ENCODE measurements at regions of chr1 and their contacts with region 1.

Region 1: DNA sequence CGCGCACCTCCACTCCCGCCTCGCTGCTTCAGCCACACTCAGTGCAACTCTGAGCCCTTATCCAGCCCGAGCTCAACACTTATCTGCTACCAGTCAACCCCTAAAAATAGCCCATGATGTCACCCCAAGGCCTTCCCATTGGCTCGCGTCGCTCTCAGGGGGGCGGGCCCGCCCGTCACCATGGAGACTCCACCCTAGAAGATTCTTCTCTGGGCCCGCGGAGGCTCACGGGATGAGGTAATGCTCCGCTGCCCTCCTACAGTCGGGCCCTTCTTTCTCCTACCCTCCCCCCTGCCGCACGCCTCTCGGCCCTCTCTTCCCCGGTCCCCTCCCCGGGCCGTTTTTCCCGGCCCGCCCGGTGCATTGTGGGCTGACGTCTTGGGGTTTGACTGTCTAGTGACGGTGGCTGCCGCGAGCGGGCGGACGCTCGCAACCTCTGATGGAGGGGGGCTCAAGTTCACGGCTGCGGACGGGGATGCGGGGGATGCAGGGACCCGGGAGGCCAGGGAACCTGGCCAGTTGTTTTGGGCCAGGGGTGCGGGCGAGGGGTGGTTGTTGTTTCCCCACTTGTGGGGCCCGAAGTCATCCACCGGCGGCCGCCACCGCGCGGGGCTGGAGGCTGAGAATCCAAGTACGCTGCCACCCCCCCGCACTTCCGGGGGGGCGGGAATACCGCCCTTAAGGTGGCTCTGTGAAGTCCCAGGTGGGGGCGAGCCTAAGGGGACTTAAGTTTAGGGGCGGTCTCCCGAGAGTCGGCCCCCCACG is at the start of gene JUN:
- DNase-seq: peak; percentile 99
- H3K4me3 ChIP-seq: peak within 1 kb of the TSS; percentile 91 to 96 (median 93)
- H3K27ac ChIP-seq: peak within 1 kb of the TSS; percentile 98
- H3K4me1 ChIP-seq: peaks cover 13% of the 10 kb centered on the region
- H3K27me3 ChIP-seq: no peaks in the 10 kb centered on the region
- CTCF ChIP-seq: peak in 1 of 2 donors; percentile 19
- total RNA-seq, gene JUN: 61.1 to 78.7 TPM

Region 2: GRCh38 chr1:58816072-58816746 is 32.0 kb after region 1 on chr1:
- CTCF ChIA-PET with region 1: no interaction called
- dilution Hi-C with region 1: loop called (anchors 5 kb)
- in situ Hi-C with region 1: no loop called
- intact Hi-C with region 1: loop called (anchors 1 kb)
- DNase-seq: peak; percentile 84
- H3K4me3 ChIP-seq: peak overlapping the region; percentile 51 to 70 (median 56)
- H3K27ac ChIP-seq: peak overlapping the region; percentile 77
- H3K4me1 ChIP-seq: peaks cover 71% of the 10 kb centered on the region
- H3K27me3 ChIP-seq: no peaks in the 10 kb centered on the region
- CTCF ChIP-seq: peak in 1 of 2 donors; percentile 25

Region 3: DNA sequence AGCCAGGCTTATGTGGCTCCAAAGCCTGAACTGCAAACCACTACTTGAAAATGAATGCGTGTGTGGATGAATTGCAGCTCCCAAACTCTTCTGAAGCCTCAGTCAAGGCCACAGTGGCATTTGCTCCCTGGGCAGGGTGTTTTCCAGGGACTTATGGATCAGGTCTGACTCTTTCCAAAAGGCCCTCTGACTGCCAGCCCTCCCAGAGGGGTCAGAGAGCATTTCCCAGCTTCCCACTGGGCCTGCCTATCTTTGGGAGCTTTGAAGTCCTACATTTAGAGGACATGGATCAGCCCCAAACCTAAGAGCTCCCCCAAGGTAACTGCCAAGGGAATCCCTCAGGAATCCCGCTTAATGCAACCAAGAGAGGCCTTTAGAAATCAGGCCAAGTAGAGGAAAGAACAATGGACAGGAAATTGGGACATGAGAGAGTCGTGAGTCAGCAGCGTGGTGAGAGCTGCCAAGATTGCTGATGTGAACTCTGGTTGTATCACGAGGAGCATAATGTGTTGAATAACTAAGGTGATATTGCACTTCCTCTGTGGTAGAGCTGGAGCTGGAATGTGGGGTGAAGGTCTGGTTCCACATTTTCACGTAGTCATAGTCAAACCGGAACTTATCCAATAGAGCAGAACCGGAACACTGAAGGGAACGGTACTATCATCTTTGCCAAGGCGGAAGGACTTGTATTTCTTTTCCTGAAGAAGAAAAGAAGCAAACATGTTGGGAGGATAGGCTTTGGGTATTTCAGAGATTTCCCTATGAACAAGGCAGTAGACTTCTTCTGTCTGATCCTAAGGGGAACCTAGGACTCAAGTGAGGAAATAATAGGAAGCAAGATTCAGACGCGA is 99.1 kb after region 1 on chr1:
- CTCF ChIA-PET with region 1: no interaction called
- dilution Hi-C with region 1: no loop called
- in situ Hi-C with region 1: no loop called
- intact Hi-C with region 1: loop called (anchors 1 kb)
- DNase-seq: peak; percentile 96
- H3K4me3 ChIP-seq: no peak overlapping the region
- H3K27ac ChIP-seq: peak overlapping the region; percentile 78
- H3K4me1 ChIP-seq: peaks cover 38% of the 10 kb centered on the region
- H3K27me3 ChIP-seq: no peaks in the 10 kb centered on the region
- CTCF ChIP-seq: no peak

Region 4: DNA sequence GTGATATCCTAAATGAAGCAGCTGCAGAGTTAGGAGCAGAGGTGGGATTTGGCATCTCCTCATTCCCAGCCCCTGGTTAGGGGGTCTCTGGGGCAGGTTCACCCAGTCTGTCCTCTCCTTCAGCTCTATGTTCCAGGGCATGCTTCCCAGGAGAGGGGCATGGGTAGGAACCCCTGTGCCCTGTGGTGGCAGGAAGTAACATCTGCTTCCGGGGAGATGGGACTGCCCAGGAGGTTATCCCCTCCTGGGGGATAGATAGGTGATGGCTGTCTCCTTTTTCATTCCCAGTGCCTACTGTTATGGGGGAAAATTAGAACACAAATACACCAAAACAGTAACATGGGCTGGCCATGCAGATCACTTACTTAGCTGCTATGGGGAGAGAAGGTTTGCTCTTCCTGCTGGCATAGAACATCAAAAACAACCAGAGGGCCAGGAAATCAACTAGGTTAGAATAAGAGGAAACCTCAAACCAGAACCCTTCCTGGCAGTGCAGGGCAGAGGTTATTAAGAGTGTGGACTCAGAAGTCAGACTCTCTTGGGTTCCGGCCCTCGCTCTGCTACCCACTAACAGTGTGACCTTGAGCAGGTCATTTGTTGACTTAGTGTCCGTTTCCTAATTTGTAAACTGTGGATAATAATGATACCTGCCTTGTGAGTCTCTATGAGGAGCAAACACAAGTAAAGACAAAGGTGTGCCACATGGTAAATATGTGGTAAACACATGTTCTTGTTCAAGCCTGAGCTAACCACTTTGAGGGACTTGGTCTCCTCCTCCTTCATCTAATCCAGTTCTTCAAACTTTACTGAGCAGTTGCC is 157.5 kb after region 1 on chr1:
- CTCF ChIA-PET with region 1: no interaction called
- dilution Hi-C with region 1: loop called (anchors 5 kb)
- in situ Hi-C with region 1: no loop called
- intact Hi-C with region 1: no loop called
- DNase-seq: no peak
- H3K4me3 ChIP-seq: no peak overlapping the region
- H3K27ac ChIP-seq: no peak overlapping the region
- H3K4me1 ChIP-seq: peaks cover 28% of the 10 kb centered on the region
- H3K27me3 ChIP-seq: no peaks in the 10 kb centered on the region
- CTCF ChIP-seq: no peak

Region 5: DNA sequence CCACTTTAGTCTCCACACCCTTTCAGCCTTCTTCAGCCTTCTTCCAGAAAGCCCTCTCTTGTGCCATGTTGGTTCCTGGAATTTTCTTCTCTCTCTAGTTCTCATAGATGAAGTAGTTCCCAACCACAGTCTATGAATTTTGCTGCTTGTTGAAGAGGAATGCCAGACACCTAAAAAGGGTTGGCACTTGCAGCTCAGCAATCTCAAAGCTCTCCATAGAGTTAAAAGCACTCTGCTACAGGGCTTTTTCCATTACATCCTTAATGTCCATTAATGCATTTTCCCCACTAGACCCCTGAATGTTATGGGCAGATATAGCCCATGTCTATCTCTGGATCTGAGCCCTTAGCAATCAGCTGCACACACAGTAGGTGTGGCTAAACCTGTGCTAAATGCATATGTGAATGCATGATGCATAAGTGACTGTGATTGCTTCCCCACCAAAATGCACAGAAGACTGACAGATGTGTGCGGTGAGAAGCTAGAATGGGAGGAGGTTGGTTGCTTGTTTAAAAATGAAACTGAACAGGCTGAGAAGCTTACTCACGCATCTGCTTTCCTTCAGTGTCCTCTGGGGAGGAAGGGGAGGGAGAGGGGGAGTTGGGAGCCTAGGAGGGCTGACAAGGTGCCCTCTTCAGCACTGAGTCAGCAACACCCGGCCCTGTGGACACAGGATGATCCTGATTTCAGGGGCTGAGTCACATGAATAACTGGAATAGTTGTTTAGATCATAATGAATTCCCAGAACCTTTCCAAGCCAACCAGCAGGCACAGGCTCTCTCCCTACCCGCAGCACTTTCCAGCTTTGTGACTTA is 366.6 kb after region 1 on chr1:
- CTCF ChIA-PET with region 1: no interaction called
- dilution Hi-C with region 1: loop called (anchors 5 kb)
- in situ Hi-C with region 1: loop called in 1 of 2 experiments (anchors 10 kb)
- intact Hi-C with region 1: loop called (anchors 1 kb)
- DNase-seq: peak; percentile 92
- H3K4me3 ChIP-seq: peak overlapping the region in 1 of 3 experiments; percentile 21
- H3K27ac ChIP-seq: peak overlapping the region; percentile 38
- H3K4me1 ChIP-seq: peaks cover 34% of the 10 kb centered on the region
- H3K27me3 ChIP-seq: no peaks in the 10 kb centered on the region
- CTCF ChIP-seq: no peak

Region 6: GRCh38 chr1:59446257-59446901 is 662.2 kb after region 1 on chr1:
- CTCF ChIA-PET with region 1: no interaction called
- dilution Hi-C with region 1: no loop called
- in situ Hi-C with region 1: no loop called
- intact Hi-C with region 1: loop called (anchors 10 kb)
- DNase-seq: peak; percentile 62
- H3K4me3 ChIP-seq: no peak overlapping the region
- H3K27ac ChIP-seq: no peak overlapping the region
- H3K4me1 ChIP-seq: peaks cover 34% of the 10 kb centered on the region
- H3K27me3 ChIP-seq: no peaks in the 10 kb centered on the region
- CTCF ChIP-seq: no peak

Region 7: DNA sequence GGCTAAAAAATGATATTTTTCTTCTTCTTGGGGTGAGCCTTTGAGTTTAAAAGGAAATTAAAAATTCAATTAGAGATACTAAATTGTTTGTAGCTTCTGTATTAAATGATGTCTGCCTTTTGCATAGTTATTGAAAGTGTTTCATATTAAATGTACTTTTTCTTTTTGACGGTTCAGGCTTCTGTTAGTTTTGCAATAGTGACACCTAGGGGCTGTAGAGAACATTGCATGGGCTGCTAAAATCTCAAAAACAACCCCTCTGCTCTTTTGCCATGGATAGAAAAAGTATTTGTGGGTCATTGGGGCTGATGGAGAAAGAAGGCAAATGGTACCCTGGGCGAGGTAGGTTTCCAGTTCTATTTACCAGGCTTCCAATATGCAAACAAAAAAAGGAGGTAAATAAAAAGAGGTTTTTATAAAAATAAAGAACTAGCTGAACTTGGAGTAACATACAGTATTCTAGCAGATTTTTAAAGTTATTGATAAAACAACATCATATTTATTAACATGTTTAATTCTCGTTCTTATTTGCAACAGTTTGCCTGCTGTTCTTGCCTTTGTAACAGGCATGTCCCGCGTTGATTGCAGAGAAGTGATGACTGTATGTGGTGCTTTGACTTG is 915.2 kb after region 1 on chr1:
- CTCF ChIA-PET with region 1: no interaction called
- dilution Hi-C with region 1: no loop called
- in situ Hi-C with region 1: no loop called
- intact Hi-C with region 1: loop called (anchors 1 kb)
- DNase-seq: no peak
- H3K4me3 ChIP-seq: no peak overlapping the region
- H3K27ac ChIP-seq: no peak overlapping the region
- H3K4me1 ChIP-seq: no peaks in the 10 kb centered on the region
- H3K27me3 ChIP-seq: no peaks in the 10 kb centered on the region
- CTCF ChIP-seq: peak; percentile 92 to 94